Endothelial cell of umbilical vein (primary cell): ENCODE measurements at regions of chr20 and their contacts with region 1.

Region 1: GRCh38 chr20:23374441-23374840 is 12.5 kb downstream of the GZF1 start:
- DNase-seq: peak; percentile 76
- H3K4me3 ChIP-seq: no peak overlapping the region
- H3K27ac ChIP-seq: peak overlapping the region; percentile 23
- H3K4me1 ChIP-seq: peaks cover 13% of the 10 kb centered on the region
- H3K27me3 ChIP-seq: no peaks in the 10 kb centered on the region
- CTCF ChIP-seq: no peak
- POLR2A ChIP-seq: no peak

Region 2: GRCh38 chr20:23386304-23387117 is 12.1 kb after region 1 on chr20:
- CTCF ChIA-PET with region 1: interaction called, 10 read pairs
- POLR2A ChIA-PET with region 1: no interaction called
- dilution Hi-C with region 1: no loop called
- intact Hi-C with region 1: no loop called
- DNase-seq: peak; percentile 20
- H3K4me3 ChIP-seq: no peak overlapping the region
- H3K27ac ChIP-seq: no peak overlapping the region
- H3K4me1 ChIP-seq: peaks cover 3% of the 10 kb centered on the region
- H3K27me3 ChIP-seq: no peaks in the 10 kb centered on the region
- CTCF ChIP-seq: no peak
- POLR2A ChIP-seq: no peak